ENCODE measurements at regions of chr5 and their contacts with region 1.

Region 1: DNA sequence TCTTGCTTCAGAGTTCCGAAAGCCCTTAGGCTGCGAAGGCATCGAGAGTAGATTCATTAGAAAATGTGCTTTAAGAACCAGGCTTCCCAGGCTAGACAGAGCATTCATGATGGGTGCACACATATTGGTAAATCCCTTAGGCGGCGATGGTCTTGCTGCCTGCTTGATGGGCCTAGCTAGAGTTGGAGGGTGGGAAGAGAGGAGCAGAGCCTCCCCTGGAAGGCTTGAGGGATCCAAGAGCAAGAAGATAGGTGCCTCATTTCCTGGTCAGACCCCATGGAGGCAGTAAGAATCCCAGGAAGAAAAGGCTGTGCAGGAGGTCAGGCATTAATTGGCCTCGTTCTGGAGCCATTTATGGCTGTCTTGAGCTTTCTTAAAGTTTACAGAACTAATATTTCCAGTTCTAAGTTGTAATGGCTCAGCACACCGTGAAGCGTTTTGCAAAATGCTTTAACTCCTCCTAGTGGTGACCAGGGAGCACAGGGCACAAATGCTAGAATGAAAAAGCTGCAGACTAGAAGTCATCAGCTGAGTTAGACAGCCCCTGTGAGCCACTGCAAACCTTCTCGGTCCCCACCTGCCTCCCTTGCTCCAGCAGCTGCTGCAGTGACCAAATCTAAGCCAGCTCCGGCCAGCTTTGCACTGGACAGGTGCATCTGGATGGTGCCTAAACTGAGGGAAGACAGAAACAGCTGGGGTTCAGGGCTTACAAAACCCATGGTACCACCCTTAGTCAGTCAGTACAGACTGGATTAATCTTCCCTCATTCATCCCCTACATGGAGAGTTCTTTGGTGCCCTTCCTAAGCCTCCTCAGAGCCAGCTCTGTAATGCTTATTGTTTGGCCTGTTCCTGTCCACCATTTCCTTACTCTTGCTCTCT is 14.7 kb downstream of the SLC45A2 start:
- DNase-seq: peak in 3 of 5 donors; percentile 13 to 19 (median 18)
- ATAC-seq: peak; percentile 64 to 81 (median 70)
- H3K4me3 ChIP-seq: no peak overlapping the region
- H3K27ac ChIP-seq: no peak overlapping the region
- H3K4me1 ChIP-seq: peaks cover 0 to 15% (median 0%) of the 10 kb centered on the region in 12 donors
- H3K27me3 ChIP-seq: no peaks in the 10 kb centered on the region
- CTCF ChIP-seq: peak; percentile 52 to 77 (median 62)
- POLR2A ChIP-seq: no peak

Region 2: GRCh38 chr5:33433303-33434240 is 536.2 kb before region 1 on chr5:
- intact Hi-C with region 1: loop called in 8 of 10 experiments (anchors 2 to 10 kb)
- DNase-seq: no peak
- ATAC-seq: no peak
- H3K4me3 ChIP-seq: no peak overlapping the region
- H3K27ac ChIP-seq: no peak overlapping the region
- H3K4me1 ChIP-seq: peaks cover 0 to 6% (median 0%) of the 10 kb centered on the region in 12 donors
- H3K27me3 ChIP-seq: no peaks in the 10 kb centered on the region
- CTCF ChIP-seq: no peak
- POLR2A ChIP-seq: no peak

Region 3: DNA sequence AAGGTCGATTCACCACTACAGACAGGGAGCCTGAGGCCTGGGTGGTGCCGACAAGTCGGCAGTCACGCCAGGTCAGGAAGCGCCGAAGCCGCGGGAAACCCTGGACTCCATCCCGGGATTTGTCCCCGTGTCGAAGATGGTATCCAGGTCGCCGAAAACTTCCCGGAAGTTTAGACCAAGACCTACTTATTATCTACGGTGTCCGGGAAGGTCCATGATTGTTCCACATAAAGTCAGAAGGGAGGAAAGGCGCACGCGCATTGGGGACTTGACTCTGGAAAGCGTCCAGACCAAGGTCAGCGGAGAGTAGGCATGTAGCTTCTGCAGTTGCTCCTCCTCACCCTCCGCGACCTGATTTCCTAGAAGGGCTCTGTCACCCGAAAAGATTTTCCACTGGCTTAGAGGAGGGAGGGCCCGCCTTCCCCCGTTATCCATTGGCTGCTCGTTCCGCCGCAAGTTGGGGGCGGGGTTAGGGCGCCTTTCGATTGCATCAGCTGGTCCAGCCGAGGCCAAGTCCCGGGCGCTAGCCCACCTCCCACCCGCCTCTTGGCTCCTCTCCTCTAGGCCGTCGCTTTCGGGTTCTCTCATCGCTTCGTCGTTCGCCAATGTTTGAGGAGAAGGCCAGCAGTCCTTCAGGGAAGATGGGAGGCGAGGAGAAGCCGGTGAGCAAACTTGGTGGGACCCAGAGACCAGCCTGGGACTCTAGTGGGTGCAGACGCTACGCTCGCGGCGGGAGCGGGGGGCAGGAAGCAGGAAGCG is 529.2 kb before region 1 on chr5 and contains the start of gene TARS1:
- intact Hi-C with region 1: loop called in 8 of 10 experiments (anchors 2 to 10 kb)
- DNase-seq: peak; percentile 98 to 99 (median 99)
- ATAC-seq: peak; percentile 96 to 99 (median 98)
- H3K4me3 ChIP-seq: peak within 1 kb of the TSS; percentile 51 to 93 (median 78)
- H3K27ac ChIP-seq: peak within 1 kb of the TSS; percentile 69 to 98 (median 94)
- H3K4me1 ChIP-seq: peaks cover 0 to 53% (median 30%) of the 10 kb centered on the region in 12 donors
- H3K27me3 ChIP-seq: no peaks in the 10 kb centered on the region
- CTCF ChIP-seq: no peak
- POLR2A ChIP-seq: peak in 1 of 2 donors; percentile 83
- total RNA-seq, gene TARS1: 58.1 to 79.7 (median 71.9) TPM

Region 4: GRCh38 chr5:33470544-33470943 is 499.3 kb before region 1 on chr5:
- intact Hi-C with region 1: loop called in 2 of 10 experiments (anchors 2 to 10 kb)
- DNase-seq: no peak
- ATAC-seq: peak in 2 of 4 donors; percentile 64 to 69
- H3K4me3 ChIP-seq: no peak overlapping the region
- H3K27ac ChIP-seq: no peak overlapping the region
- H3K4me1 ChIP-seq: no peaks in the 10 kb centered on the region
- H3K27me3 ChIP-seq: no peaks in the 10 kb centered on the region
- CTCF ChIP-seq: peak in 9 of 12 donors; percentile 7 to 61 (median 33)
- POLR2A ChIP-seq: no peak

Measured in heart left ventricle (tissue), 16 donors.